ENCODE measurements at regions of chr18 and their contacts with region 1.

Region 1: GRCh38 chr18:10560450-10561045 is 34.7 kb downstream of the NAPG start:
- DNase-seq: peak; percentile 44 to 80
- ATAC-seq: peak; percentile 79

Region 2: GRCh38 chr18:10169064-10169562 is 391.4 kb before region 1 on chr18:
- intact Hi-C with region 1: no loop called
- DNase-seq: no peak
- ATAC-seq: no peak

Region 3: GRCh38 chr18:10833656-10834055 is 273.1 kb after region 1 on chr18:
- intact Hi-C with region 1: no loop called
- DNase-seq: no peak
- ATAC-seq: no peak

Region 4: DNA sequence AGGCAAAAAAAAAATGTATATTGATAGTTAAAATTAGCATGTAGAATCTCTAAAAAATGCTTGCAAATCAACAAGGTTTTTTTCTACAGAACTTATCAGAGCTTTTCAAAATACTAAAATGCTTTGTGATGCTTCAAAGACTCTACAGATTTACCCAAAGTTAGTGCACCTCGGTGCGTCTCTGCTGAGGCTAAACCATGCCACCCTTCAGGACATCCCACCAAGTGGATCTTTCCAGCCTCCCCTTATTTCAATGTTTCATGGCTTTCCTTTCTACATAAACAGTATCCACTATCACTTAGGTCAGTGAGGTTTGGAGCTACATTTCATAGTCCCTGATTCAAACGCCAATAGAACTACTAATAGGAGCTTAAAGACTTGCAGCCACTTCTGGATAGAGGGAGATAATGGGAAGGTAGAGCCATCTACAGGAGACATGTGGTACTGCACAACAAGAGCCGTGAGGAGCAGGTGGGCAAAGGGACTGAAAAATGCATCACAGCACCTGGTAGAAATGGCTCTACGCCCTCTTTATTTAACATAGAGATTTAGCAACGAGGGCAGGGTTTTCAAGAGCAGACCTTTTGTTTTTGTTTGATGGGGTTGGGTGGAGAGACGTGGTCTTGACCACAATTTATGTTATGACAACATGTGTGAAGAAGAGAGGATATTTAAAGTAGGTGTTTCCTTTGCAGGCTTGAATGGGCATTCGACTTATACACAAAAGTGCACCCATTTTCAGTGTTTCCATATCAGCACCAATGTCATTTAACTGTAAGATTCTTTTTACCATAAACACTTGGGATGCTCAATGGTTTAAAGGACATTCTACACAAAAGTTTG is 992.8 kb after region 1 on chr18:
- intact Hi-C with region 1: loop called in 1 of 2 experiments (anchors 5 kb)
- DNase-seq: peak in 1 of 2 donors; percentile 15
- ATAC-seq: peak; percentile 40

Region 5: DNA sequence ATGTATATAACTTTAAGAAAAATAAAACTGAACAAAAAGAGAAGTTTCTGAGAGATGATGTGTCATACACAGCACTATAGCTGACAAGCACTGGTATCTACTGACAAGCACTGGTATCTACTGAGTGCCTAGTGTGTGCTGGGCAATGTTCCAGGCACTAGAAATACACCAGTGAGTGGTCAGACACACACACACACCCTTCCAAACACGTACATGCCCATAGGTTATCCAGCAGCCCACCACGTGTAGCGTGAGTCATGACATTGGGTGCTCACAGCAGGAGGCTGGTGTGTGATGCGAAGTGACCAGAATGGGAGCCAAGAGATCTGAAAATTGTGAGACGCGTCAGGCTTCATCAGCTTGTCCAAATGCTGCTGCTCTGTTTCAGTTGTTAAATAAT is 1116.3 kb after region 1 on chr18:
- intact Hi-C with region 1: no loop called
- DNase-seq: no peak
- ATAC-seq: no peak